ENCODE measurements at regions of chr5 and their contacts with region 1.

Region 1: GRCh38 chr5:154405078-154405792 is 40.6 kb upstream of the SAP30L start:
- DNase-seq: peak; percentile 82 to 83
- H3K4me3 ChIP-seq: peak overlapping the region in 1 of 3 donors; percentile 16
- H3K27ac ChIP-seq: no peak overlapping the region
- H3K4me1 ChIP-seq: peaks cover 0 to 8% of the 10 kb centered on the region in 2 donors
- H3K27me3 ChIP-seq: no peaks in the 10 kb centered on the region
- CTCF ChIP-seq: peak; percentile 79 to 96 (median 88)
- POLR2A ChIP-seq: no peak

Region 2: DNA sequence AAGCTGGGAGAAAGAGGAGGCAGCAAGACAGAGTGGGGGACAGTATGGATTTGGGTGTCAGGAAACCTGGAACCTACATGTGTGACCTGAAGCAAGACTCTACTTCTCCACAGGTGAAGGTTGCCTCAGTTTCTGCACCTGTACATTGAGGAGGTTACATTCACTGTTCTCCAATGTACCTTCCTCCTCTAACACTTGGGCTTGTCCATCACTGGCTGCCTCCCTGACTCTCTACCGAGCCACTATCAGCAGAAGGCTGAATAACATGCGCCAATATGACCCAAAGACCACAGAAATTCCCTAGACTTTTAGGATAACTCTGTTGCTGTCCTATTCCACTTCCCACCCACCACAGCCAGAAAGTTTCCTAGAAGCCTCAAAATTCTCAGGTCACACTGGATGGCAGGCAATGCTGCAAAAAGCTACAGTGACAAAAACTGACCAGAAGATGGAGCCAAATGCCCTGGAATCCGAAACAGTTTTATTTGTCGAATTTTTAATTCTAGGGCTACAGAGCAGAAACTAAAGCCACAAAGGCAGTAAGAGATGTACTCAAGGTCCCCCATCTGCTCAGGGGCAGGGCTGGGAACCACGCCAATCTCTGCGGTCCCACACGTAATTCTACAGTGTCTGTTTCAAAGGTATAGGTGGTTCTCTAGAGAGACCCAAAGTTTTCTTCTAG is 431.0 kb before region 1 on chr5:
- intact Hi-C with region 1: loop called (anchors 10 kb)
- DNase-seq: peak in 1 of 2 donors; percentile 11
- H3K4me3 ChIP-seq: no peak overlapping the region
- H3K27ac ChIP-seq: no peak overlapping the region
- H3K4me1 ChIP-seq: no peaks in the 10 kb centered on the region
- H3K27me3 ChIP-seq: no peaks in the 10 kb centered on the region
- CTCF ChIP-seq: peak in 5 of 6 experiments; percentile 41 to 70 (median 50)
- POLR2A ChIP-seq: no peak

Region 3: DNA sequence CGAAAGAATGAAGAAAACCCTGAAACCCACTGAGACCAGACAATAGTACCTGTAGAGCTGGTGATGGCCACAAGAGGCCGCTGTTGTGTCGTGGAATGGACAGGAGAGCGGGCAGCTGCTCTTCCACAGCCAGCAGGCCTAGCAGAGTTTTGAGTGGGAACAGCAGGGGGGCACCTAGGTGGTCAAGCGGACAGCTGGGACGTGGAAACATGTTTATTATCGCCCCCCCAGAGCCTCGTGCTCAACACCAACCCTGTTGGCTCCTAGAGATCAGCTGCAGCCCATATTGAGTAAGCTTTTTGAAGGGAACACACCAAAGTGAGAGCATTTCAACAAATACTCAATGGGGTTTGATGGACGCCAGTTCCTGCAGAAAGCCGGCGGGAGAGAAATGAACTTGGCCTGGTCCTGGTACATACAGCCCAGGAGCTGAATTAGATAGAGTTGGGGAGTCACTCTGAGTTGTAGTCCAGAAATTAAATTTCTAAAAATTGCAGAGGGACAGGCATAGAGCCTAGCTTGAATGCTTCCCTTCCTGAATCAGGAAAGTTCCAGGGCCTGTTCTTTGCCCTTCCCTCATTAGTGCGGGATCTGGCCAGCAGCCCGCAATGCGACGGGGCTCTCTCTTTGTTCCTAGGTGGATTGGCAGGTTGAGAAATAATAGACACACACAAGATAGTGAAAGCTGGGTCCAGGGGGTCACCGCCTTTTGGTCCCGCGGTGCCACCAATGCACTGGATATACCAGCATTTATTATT is 332.6 kb before region 1 on chr5:
- intact Hi-C with region 1: loop called (anchors 5 kb)
- DNase-seq: peak; percentile 80 to 88
- H3K4me3 ChIP-seq: no peak overlapping the region
- H3K27ac ChIP-seq: no peak overlapping the region
- H3K4me1 ChIP-seq: peaks cover 12 to 21% of the 10 kb centered on the region in 2 donors
- H3K27me3 ChIP-seq: no peaks in the 10 kb centered on the region
- CTCF ChIP-seq: peak; percentile 69 to 97 (median 94)
- POLR2A ChIP-seq: no peak

Region 4: GRCh38 chr5:154179846-154180710 is 225.2 kb before region 1 on chr5:
- intact Hi-C with region 1: loop called (anchors 5 kb)
- DNase-seq: peak in 1 of 2 donors; percentile 39
- H3K4me3 ChIP-seq: no peak overlapping the region
- H3K27ac ChIP-seq: no peak overlapping the region
- H3K4me1 ChIP-seq: no peaks in the 10 kb centered on the region
- H3K27me3 ChIP-seq: no peaks in the 10 kb centered on the region
- CTCF ChIP-seq: peak; percentile 39 to 84 (median 74)
- POLR2A ChIP-seq: no peak

Region 5: GRCh38 chr5:154449786-154450185 is 44.6 kb after region 1 on chr5:
- intact Hi-C with region 1: no loop called
- DNase-seq: no peak
- H3K4me3 ChIP-seq: no peak overlapping the region
- H3K27ac ChIP-seq: no peak overlapping the region
- H3K4me1 ChIP-seq: peaks cover 10 to 15% of the 10 kb centered on the region in 2 donors
- H3K27me3 ChIP-seq: no peaks in the 10 kb centered on the region
- CTCF ChIP-seq: no peak
- POLR2A ChIP-seq: no peak

Region 6: GRCh38 chr5:154520861-154521453 is 115.7 kb after region 1 on chr5:
- intact Hi-C with region 1: no loop called
- DNase-seq: peak; percentile 45 to 49
- H3K4me3 ChIP-seq: peak overlapping the region in 1 of 3 donors; percentile 9
- H3K27ac ChIP-seq: no peak overlapping the region
- H3K4me1 ChIP-seq: peaks cover 9 to 16% of the 10 kb centered on the region in 2 donors
- H3K27me3 ChIP-seq: no peaks in the 10 kb centered on the region
- CTCF ChIP-seq: peak; percentile 29 to 79 (median 56)
- POLR2A ChIP-seq: no peak

Region 7: GRCh38 chr5:154916884-154917283 is 511.6 kb after region 1 on chr5:
- intact Hi-C with region 1: no loop called
- DNase-seq: no peak
- H3K4me3 ChIP-seq: no peak overlapping the region
- H3K27ac ChIP-seq: no peak overlapping the region
- H3K4me1 ChIP-seq: no peaks in the 10 kb centered on the region
- H3K27me3 ChIP-seq: no peaks in the 10 kb centered on the region
- CTCF ChIP-seq: no peak
- POLR2A ChIP-seq: no peak

Measured in thyroid gland (tissue), 4 donors.